CD14-positive monocyte (primary cell): ENCODE measurements at regions of chr6 and their contacts with region 1.

Region 1: DNA sequence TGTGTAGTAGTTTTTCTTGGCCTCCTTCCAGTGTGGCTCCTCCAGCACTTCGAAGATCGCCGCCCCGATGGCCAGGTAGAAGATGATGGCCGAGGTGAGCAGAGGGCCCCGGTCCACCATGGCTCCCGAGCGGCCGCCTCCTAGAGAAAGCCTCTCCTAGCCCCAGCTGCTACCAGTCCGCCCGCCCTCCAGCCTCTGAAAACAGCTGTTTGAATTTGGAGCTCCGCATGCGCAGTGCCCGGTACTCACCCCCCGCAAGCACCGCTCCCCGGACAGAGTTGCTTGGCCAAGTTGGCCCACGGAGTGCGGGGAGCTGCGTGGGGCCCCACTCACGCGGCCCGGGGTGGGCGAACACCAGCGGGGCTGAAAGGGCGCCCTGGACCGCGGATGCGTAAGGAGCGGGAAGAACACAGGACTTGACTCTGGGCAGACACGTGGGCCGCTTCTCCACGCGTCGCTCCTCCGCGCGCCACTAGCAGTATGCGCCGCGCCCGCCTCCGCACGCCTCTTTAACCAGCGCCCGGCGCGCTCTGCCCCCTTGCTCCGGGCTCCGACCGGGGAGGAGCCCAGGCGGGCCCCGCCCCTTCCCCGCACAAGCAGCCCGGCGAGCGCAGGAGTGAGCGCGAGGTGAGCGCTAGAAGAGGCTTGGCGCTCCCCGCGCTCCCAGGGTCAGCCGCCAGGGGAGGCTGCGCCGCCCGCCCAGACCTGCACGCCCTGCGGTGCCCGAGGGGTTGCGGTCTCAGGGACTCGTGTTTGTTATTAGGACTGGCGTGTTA is at the start of gene KCNK5:
- DNase-seq: peak; percentile 62 to 79 (median 70)
- H3K4me3 ChIP-seq: peak within 1 kb of the TSS; percentile 46 to 77 (median 57)
- H3K4me3 Mint-ChIP-seq: peak within 1 kb of the TSS; percentile 80 to 91
- H3K27ac ChIP-seq: no peak within 1 kb of the TSS
- H3K27ac Mint-ChIP-seq: peak within 1 kb of the TSS in 3 of 7 donors; percentile 17 to 64 (median 19)
- H3K4me1 ChIP-seq: peaks cover 56 to 59% of the 10 kb centered on the region in 2 donors
- H3K4me1 Mint-ChIP-seq: peaks cover 56% of the 10 kb centered on the region
- H3K27me3 ChIP-seq: no peaks in the 10 kb centered on the region
- H3K27me3 Mint-ChIP-seq: peaks cover 2 to 18% (median 13%) of the 10 kb centered on the region in 3 donors
- CTCF ChIP-seq: peak; percentile 77
- polyA plus RNA-seq, gene KCNK5: 0.09 TPM in 1 of 3 donors, not detected in the others

Region 2: DNA sequence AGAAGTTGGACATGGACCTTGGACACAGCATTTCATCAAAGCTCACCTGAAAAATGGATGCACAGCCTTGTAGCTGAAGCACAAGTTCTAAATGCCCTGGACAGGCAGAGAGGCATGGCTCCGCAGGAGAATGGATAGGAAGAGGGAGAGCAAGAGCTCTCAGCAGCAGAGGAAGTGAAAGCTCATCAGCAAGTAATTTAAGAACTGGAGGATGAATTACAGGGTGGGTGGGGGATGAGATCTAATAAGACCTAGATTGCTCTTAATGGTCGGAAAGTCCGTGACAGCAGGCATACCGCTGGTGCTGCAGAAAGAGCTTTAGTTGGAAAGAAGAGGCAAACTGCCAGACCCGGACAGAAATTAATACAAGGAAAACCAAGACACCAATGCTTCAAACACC is 76.9 kb before region 1 on chr6:
- intact Hi-C with region 1: no loop called
- DNase-seq: no peak
- H3K4me3 ChIP-seq: no peak overlapping the region
- H3K4me3 Mint-ChIP-seq: no peak overlapping the region
- H3K27ac ChIP-seq: no peak overlapping the region
- H3K27ac Mint-ChIP-seq: no peak overlapping the region
- H3K4me1 ChIP-seq: no peaks in the 10 kb centered on the region
- H3K4me1 Mint-ChIP-seq: peaks cover 5% of the 10 kb centered on the region
- H3K27me3 ChIP-seq: no peaks in the 10 kb centered on the region
- H3K27me3 Mint-ChIP-seq: peaks cover 6 to 19% (median 9%) of the 10 kb centered on the region in 3 donors
- CTCF ChIP-seq: no peak

Region 3: DNA sequence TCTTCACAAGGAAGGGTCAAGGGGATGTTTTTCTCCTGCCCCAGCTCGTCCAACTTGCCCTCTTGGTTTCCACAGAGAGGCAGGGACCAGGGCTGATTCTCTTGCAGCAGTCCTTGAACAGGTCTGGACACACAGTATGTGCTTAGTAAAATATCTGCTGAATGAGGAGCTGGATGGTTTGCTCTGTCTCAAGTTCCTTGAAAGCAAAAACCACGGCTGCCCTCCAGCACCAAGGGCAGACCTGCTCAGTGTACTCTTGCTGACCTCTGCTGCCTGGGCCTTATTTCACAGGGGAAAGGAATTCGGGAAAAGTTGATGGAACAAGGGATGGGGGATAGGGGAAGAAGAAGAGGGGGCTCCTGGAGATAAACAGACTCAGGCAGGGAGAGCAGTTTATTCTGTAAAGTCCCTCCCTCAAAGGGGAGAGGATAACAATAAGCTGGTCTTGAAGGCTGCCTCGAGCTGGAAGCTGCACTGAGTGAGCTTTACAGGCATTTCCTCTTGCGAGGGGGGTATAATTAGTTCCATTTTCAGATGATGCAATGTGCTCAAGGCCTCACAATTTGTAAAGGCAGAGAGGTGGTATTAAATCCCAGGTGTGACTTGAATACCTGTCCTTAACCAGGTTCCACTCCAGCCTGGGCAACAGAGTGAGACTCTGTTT is 10.2 kb before region 1 on chr6:
- intact Hi-C with region 1: no loop called
- DNase-seq: peak in 2 of 3 donors; percentile 31 to 34
- H3K4me3 ChIP-seq: peak overlapping the region in 1 of 3 experiments; percentile 28
- H3K4me3 Mint-ChIP-seq: peak overlapping the region in 1 of 2 donors; percentile 65
- H3K27ac ChIP-seq: peak overlapping the region; percentile 18 to 34
- H3K27ac Mint-ChIP-seq: peak overlapping the region in 6 of 7 donors; percentile 37 to 78 (median 72)
- H3K4me1 ChIP-seq: peaks cover 34 to 45% of the 10 kb centered on the region in 2 donors
- H3K4me1 Mint-ChIP-seq: peaks cover 55% of the 10 kb centered on the region
- H3K27me3 ChIP-seq: no peaks in the 10 kb centered on the region
- H3K27me3 Mint-ChIP-seq: peaks cover 0 to 1% (median 0%) of the 10 kb centered on the region in 3 donors
- CTCF ChIP-seq: no peak

Region 4: DNA sequence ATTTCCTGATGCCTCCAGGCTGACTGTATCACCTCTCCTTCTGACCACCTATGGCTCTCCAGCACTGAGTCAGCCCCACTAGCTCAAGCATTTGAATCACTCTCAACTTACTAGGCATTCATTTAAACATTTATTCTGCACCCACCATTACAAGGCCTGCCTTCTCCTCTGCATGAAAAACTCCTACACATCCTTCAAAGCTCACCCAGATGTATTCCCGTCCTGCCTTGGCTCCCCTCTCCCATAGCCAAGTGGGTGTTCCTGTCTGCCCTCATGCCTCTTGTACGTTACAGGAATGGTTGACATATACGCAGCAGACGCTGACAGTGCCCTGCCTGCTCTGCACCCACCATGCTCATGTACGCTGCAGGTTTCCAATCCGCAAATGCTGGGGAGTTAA is 63.5 kb after region 1 on chr6:
- intact Hi-C with region 1: no loop called
- DNase-seq: no peak
- H3K4me3 ChIP-seq: no peak overlapping the region
- H3K4me3 Mint-ChIP-seq: no peak overlapping the region
- H3K27ac ChIP-seq: no peak overlapping the region
- H3K27ac Mint-ChIP-seq: peak overlapping the region in 1 of 7 donors; percentile 46
- H3K4me1 ChIP-seq: peaks cover 17 to 19% of the 10 kb centered on the region in 2 donors
- H3K4me1 Mint-ChIP-seq: peaks cover 28% of the 10 kb centered on the region
- H3K27me3 ChIP-seq: no peaks in the 10 kb centered on the region
- H3K27me3 Mint-ChIP-seq: peaks cover 3 to 10% (median 6%) of the 10 kb centered on the region in 3 donors
- CTCF ChIP-seq: no peak

Region 5: GRCh38 chr6:39302669-39303424 is 73.7 kb after region 1 on chr6:
- intact Hi-C with region 1: loop called in 1 of 2 experiments (anchors 10 kb)
- DNase-seq: peak; percentile 70 to 80 (median 80)
- H3K4me3 ChIP-seq: peak overlapping the region in 1 of 3 experiments; percentile 61
- H3K4me3 Mint-ChIP-seq: peak overlapping the region; percentile 67 to 89
- H3K27ac ChIP-seq: no peak overlapping the region
- H3K27ac Mint-ChIP-seq: peak overlapping the region in 4 of 7 donors; percentile 3 to 82 (median 36)
- H3K4me1 ChIP-seq: peaks cover 7 to 13% of the 10 kb centered on the region in 2 donors
- H3K4me1 Mint-ChIP-seq: peaks cover 15% of the 10 kb centered on the region
- H3K27me3 ChIP-seq: no peaks in the 10 kb centered on the region
- H3K27me3 Mint-ChIP-seq: peaks cover 4 to 8% (median 5%) of the 10 kb centered on the region in 3 donors
- CTCF ChIP-seq: peak; percentile 95